Activated CD8-positive, alpha-beta memory T cell treated with anti-CD3 and anti-CD28 coated beads, Interleukin-2, amount 10 ng/mL, durations not matched to agents 7 days and 5 days (primary cell): ENCODE measurements at regions of chr1 and their contacts with region 1.

Region 1: GRCh38 chr1:160098852-160099561 is 588 bp upstream of the IGSF8 start:
- DNase-seq: peak; percentile 99
- ATAC-seq: peak; percentile 89
- H3K4me3 Mint-ChIP-seq: peak overlapping the region; percentile 70
- H3K27ac Mint-ChIP-seq: peak overlapping the region; percentile 84
- H3K4me1 Mint-ChIP-seq: peaks cover 38% of the 10 kb centered on the region
- H3K27me3 Mint-ChIP-seq: no peaks in the 10 kb centered on the region

Region 2: GRCh38 chr1:160028426-160028825 is 70.6 kb before region 1 on chr1:
- CTCF ChIA-PET with region 1: no interaction called
- DNase-seq: no peak
- ATAC-seq: no peak
- H3K4me3 Mint-ChIP-seq: no peak overlapping the region
- H3K27ac Mint-ChIP-seq: no peak overlapping the region
- H3K4me1 Mint-ChIP-seq: peaks cover 27% of the 10 kb centered on the region
- H3K27me3 Mint-ChIP-seq: no peaks in the 10 kb centered on the region

Region 3: DNA sequence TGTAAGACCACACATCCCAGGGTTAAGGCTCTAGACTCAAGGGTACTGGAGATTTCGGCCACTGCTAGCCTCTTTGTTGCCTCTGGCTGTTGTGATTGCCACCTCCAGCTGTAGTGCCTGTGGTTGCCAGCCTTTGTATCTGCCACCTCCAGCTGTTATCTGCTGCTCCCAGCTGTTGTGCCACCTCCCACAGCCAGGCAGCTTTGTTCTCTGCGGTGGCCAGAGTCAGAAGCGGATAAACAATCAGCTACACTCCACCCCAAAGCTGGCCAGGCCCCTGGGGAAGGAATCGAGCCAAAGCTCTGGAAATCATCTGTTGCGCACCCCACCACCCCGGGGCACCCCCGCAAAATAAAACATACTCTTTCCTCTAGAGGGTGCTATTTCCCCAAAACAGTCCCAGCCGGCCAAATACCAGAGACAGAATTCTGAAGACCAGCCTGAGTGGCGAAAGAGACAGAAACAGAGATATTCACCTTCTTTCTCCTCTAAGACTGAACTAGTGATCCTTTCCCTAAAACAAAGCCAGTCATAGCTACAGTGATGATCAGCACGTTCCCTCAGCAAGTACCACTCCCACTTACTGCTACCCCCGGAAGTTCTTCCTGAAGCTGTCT is 52.4 kb before region 1 on chr1:
- CTCF ChIA-PET with region 1: interaction called, 633 read pairs
- DNase-seq: peak; percentile 56
- ATAC-seq: peak; percentile 87
- H3K4me3 Mint-ChIP-seq: peak overlapping the region; percentile 62
- H3K27ac Mint-ChIP-seq: peak overlapping the region; percentile 42
- H3K4me1 Mint-ChIP-seq: peaks cover 12% of the 10 kb centered on the region
- H3K27me3 Mint-ChIP-seq: peaks cover 35% of the 10 kb centered on the region

Region 4: DNA sequence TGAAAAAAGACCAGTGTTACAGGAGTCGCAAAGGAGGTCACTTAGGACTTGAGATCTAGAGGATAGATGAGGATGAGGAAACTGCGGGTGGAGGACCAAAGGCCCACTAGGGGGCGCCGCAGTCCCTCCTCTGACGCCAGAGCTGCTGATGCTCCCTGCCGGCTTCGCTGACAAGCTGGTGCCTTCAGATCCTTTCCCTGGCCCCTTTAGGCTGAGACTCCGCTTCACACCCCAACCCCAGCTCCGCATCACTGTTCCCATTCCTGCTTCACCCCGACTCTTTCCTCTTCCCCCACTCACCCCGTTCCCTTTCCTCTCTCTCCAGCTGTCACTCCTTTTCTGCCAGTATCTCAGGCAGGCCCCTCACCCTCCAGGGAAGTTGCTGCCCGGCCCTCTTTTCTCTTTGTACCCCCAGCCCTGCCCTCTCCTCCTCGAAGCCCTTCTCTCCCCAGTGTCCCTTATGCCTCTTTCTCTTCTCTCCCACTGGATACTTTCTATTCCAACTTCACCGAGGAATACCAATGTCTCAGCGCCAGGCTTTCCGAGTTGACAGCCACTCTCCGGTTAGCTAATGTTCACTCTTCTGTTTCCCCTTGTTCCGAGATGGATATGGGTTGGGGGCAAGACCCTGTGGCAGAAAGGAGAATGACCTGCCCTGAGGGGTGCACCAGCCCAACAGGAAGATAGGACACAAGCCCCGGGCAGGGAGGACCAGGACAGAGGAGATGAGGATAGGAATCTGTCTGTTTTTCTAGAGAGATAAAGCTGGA is 13.1 kb before region 1 on chr1:
- CTCF ChIA-PET with region 1: interaction called, 115 read pairs
- DNase-seq: peak; percentile 83
- ATAC-seq: peak; percentile 61
- H3K4me3 Mint-ChIP-seq: no peak overlapping the region
- H3K27ac Mint-ChIP-seq: no peak overlapping the region
- H3K4me1 Mint-ChIP-seq: peaks cover 7% of the 10 kb centered on the region
- H3K27me3 Mint-ChIP-seq: peaks cover 24% of the 10 kb centered on the region

Region 5: DNA sequence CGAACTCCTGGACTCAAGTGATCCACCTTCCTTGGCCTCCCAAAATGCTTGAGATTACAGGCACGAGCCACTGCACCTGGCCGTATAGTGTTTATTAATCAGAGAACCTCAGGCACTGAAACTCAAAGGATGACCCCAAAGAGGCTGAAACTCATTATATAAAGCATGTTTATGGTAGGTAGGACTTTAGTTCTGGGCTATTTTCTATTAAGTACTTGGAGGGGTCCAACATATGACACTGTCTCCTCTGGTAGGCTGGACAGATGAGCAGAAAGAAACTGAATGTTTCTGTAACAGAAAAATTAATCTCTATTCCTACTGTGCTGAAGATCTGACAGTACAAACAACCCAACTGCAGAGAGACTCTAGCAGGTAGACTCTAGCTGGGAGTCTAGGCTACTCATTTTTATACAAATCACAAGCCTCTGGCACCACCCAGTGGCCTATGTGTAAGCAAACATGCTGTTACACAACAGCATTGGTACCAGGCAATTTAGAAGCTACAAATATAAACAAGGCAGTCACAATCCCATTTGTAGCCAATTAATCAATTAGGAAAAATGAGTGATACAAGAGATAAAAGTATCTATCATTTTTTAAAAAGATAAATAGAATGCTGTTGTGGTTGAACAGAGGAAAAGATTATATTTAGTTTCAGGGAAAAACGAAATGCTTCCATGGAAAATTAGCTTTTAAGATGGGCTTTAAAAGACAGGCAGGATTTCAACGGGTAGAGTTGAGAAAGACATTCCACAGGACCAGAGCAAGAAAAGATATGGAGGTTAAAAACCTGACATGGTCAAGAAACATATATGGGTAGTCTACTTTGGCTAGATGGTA is 152.9 kb after region 1 on chr1:
- CTCF ChIA-PET with region 1: interaction called, 47 read pairs
- DNase-seq: peak; percentile 74
- ATAC-seq: peak; percentile 92
- H3K4me3 Mint-ChIP-seq: no peak overlapping the region
- H3K27ac Mint-ChIP-seq: no peak overlapping the region
- H3K4me1 Mint-ChIP-seq: peaks cover 11% of the 10 kb centered on the region
- H3K27me3 Mint-ChIP-seq: no peaks in the 10 kb centered on the region

Region 6: DNA sequence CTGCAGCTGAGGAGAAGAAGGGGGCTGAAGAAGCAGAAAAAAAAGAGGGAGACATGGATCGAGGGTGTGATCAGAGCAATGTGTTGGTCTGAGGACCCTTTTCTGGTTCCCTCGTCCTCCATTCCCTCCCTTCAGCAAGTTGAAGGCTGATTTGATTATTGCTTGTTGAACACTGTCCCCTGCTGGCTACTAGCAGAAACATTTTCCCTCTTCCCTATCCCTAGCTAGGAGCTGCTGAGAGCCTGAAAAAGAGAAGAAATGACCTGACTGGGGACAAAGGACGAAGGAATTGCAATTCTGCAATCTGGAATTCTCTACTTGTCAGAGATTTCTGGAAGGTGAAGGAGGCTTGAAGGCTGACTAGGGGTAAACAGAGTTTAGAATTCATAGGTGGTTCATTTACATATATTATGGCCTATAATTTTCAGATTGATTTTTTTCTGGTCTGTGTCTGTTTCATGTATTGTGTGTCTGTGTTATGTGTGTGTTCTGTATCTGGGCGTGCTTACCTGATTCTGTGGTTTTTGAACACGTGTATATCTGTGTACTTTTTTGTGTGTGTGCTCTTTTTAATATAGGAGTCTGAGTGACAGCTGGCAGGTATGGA is 277.6 kb after region 1 on chr1:
- CTCF ChIA-PET with region 1: interaction called, 41 read pairs
- DNase-seq: peak; percentile 57
- ATAC-seq: peak; percentile 84
- H3K4me3 Mint-ChIP-seq: no peak overlapping the region
- H3K27ac Mint-ChIP-seq: no peak overlapping the region
- H3K4me1 Mint-ChIP-seq: peaks cover 13% of the 10 kb centered on the region
- H3K27me3 Mint-ChIP-seq: peaks cover 4% of the 10 kb centered on the region